PC-9 (cell line): ENCODE measurements at regions of chr1 and their contacts with region 1.

Region 1: GRCh38 chr1:39832294-39832693 is 43.6 kb upstream of the BMP8B start:
- DNase-seq: no peak
- H3K4me3 ChIP-seq: no peak overlapping the region
- H3K27ac ChIP-seq: no peak overlapping the region
- H3K4me1 ChIP-seq: peaks cover 13% of the 10 kb centered on the region
- H3K27me3 ChIP-seq: no peaks in the 10 kb centered on the region
- CTCF ChIP-seq: no peak

Region 2: GRCh38 chr1:39955547-39956539 is 123.5 kb after region 1 on chr1:
- CTCF ChIA-PET with region 1: no interaction called
- POLR2A ChIA-PET with region 1: interaction called, 25 read pairs
- intact Hi-C with region 1: no loop called
- DNase-seq: peak; percentile 47 to 62
- H3K4me3 ChIP-seq: peak overlapping the region; percentile 69
- H3K27ac ChIP-seq: no peak overlapping the region
- H3K4me1 ChIP-seq: peaks cover 9% of the 10 kb centered on the region
- H3K27me3 ChIP-seq: no peaks in the 10 kb centered on the region
- CTCF ChIP-seq: no peak